CD4-positive, alpha-beta memory T cell (primary cell): ENCODE measurements at regions of chr12 and their contacts with region 1.

Region 1: DNA sequence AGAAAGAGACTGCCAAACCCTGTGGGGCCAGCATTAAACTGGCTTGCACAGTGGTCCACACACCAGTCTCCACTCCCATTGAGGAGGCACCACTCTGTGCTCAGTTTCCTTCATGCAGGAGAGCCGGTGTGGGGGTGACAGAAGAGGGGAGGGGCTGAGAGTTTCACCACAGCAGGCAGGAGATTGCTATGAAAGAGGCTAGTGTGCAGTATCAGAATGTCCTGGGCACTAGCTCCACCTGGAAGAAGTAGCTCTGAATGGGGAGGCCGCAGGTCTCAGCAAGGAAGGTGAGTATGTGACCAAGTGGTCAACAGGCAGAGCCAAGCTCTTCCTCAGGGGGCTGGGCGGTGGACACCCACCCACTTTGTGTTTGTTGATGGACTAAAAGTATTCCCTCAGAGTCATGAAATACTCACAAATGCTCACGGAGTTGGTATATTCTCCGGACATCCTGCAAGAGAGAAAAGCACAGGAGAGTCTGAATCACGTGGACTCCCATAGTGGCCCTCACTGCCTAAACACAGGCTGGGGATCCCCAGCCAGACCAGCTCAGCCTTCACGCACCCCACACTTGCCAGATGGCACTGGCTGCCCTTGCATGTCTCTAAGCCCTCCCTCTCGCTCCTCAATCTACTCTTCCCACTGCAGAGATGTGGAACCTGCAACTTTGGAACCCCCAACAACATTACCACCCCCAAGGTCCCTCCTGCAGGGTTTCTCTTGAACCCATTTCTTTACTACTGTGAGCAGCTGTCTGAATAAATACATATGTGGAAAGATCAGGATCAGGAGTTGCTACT is 7.8 kb upstream of the KRT72 start:
- DNase-seq: no peak
- H3K4me3 ChIP-seq: no peak overlapping the region
- H3K4me3 Mint-ChIP-seq: peak overlapping the region in 3 of 8 donors; percentile 30 to 58 (median 39)
- H3K27ac ChIP-seq: no peak overlapping the region
- H3K27ac Mint-ChIP-seq: peak overlapping the region; percentile 69 to 96 (median 76)
- H3K4me1 ChIP-seq: peaks cover 69% of the 10 kb centered on the region
- H3K4me1 Mint-ChIP-seq: peaks cover 22 to 93% (median 65%) of the 10 kb centered on the region in 4 donors
- H3K27me3 ChIP-seq: no peaks in the 10 kb centered on the region
- H3K27me3 Mint-ChIP-seq: peaks cover 4 to 6% of the 10 kb centered on the region in 2 donors

Region 2: GRCh38 chr12:52634266-52635056 is 25.4 kb after region 1 on chr12:
- CTCF ChIA-PET with region 1: interaction called, 7 read pairs
- POLR2A ChIA-PET with region 1: interaction called, 10 read pairs
- intact Hi-C with region 1: no loop called
- DNase-seq: no peak
- H3K4me3 ChIP-seq: no peak overlapping the region
- H3K4me3 Mint-ChIP-seq: peak overlapping the region in 1 of 8 donors; percentile 54
- H3K27ac ChIP-seq: no peak overlapping the region
- H3K27ac Mint-ChIP-seq: peak overlapping the region in 5 of 7 donors; percentile 28 to 85 (median 54)
- H3K4me1 ChIP-seq: peaks cover 21% of the 10 kb centered on the region
- H3K4me1 Mint-ChIP-seq: peaks cover 12 to 52% (median 33%) of the 10 kb centered on the region in 4 donors
- H3K27me3 ChIP-seq: no peaks in the 10 kb centered on the region
- H3K27me3 Mint-ChIP-seq: peaks cover 3% of the 10 kb centered on the region in 2 donors

Region 3: GRCh38 chr12:52672321-52672933 is 63.4 kb after region 1 on chr12:
- CTCF ChIA-PET with region 1: no interaction called
- POLR2A ChIA-PET with region 1: no interaction called
- intact Hi-C with region 1: no loop called
- DNase-seq: no peak
- H3K4me3 ChIP-seq: no peak overlapping the region
- H3K4me3 Mint-ChIP-seq: no peak overlapping the region
- H3K27ac ChIP-seq: no peak overlapping the region
- H3K27ac Mint-ChIP-seq: no peak overlapping the region
- H3K4me1 ChIP-seq: no peaks in the 10 kb centered on the region
- H3K4me1 Mint-ChIP-seq: peaks cover 0 to 4% (median under 1%) of the 10 kb centered on the region in 4 donors
- H3K27me3 ChIP-seq: no peaks in the 10 kb centered on the region
- H3K27me3 Mint-ChIP-seq: peaks cover 9 to 13% of the 10 kb centered on the region in 2 donors

Region 4: GRCh38 chr12:52870351-52871290 is 261.6 kb after region 1 on chr12:
- CTCF ChIA-PET with region 1: interaction called, 5 read pairs
- POLR2A ChIA-PET with region 1: interaction called, 11 read pairs
- intact Hi-C with region 1: no loop called
- DNase-seq: peak; percentile 66 to 76 (median 72)
- H3K4me3 ChIP-seq: no peak overlapping the region
- H3K4me3 Mint-ChIP-seq: peak overlapping the region in 3 of 8 donors; percentile 16 to 49 (median 22)
- H3K27ac ChIP-seq: no peak overlapping the region
- H3K27ac Mint-ChIP-seq: peak overlapping the region in 4 of 7 donors; percentile 27 to 85 (median 62)
- H3K4me1 ChIP-seq: peaks cover 21% of the 10 kb centered on the region
- H3K4me1 Mint-ChIP-seq: peaks cover 15 to 29% (median 24%) of the 10 kb centered on the region in 4 donors
- H3K27me3 ChIP-seq: no peaks in the 10 kb centered on the region
- H3K27me3 Mint-ChIP-seq: no peaks in the 10 kb centered on the region